Gastrocnemius medialis (tissue), 4 donors: ENCODE measurements at regions of chr1 and their contacts with region 1.

Region 1: GRCh38 chr1:59020151-59020997 is 236.5 kb upstream of the JUN start:
- DNase-seq: peak; percentile 31 to 69
- ATAC-seq: peak; percentile 72 to 73
- H3K4me3 ChIP-seq: peak overlapping the region; percentile 35 to 48 (median 36)
- H3K27ac ChIP-seq: peak overlapping the region; percentile 93 to 96 (median 95)
- H3K4me1 ChIP-seq: peaks cover 25 to 33% of the 10 kb centered on the region in 2 donors
- H3K27me3 ChIP-seq: no peaks in the 10 kb centered on the region
- CTCF ChIP-seq: no peak
- POLR2A ChIP-seq: no peak

Region 2: DNA sequence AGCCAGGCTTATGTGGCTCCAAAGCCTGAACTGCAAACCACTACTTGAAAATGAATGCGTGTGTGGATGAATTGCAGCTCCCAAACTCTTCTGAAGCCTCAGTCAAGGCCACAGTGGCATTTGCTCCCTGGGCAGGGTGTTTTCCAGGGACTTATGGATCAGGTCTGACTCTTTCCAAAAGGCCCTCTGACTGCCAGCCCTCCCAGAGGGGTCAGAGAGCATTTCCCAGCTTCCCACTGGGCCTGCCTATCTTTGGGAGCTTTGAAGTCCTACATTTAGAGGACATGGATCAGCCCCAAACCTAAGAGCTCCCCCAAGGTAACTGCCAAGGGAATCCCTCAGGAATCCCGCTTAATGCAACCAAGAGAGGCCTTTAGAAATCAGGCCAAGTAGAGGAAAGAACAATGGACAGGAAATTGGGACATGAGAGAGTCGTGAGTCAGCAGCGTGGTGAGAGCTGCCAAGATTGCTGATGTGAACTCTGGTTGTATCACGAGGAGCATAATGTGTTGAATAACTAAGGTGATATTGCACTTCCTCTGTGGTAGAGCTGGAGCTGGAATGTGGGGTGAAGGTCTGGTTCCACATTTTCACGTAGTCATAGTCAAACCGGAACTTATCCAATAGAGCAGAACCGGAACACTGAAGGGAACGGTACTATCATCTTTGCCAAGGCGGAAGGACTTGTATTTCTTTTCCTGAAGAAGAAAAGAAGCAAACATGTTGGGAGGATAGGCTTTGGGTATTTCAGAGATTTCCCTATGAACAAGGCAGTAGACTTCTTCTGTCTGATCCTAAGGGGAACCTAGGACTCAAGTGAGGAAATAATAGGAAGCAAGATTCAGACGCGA is 137.1 kb before region 1 on chr1:
- in situ Hi-C with region 1: no loop called
- intact Hi-C with region 1: loop called (anchors 5 kb)
- DNase-seq: peak; percentile 74 to 88
- ATAC-seq: peak; percentile 68 to 79
- H3K4me3 ChIP-seq: no peak overlapping the region
- H3K27ac ChIP-seq: peak overlapping the region; percentile 80 to 89 (median 84)
- H3K4me1 ChIP-seq: peaks cover 62 to 67% of the 10 kb centered on the region in 2 donors
- H3K27me3 ChIP-seq: no peaks in the 10 kb centered on the region
- CTCF ChIP-seq: no peak
- POLR2A ChIP-seq: no peak

Region 3: DNA sequence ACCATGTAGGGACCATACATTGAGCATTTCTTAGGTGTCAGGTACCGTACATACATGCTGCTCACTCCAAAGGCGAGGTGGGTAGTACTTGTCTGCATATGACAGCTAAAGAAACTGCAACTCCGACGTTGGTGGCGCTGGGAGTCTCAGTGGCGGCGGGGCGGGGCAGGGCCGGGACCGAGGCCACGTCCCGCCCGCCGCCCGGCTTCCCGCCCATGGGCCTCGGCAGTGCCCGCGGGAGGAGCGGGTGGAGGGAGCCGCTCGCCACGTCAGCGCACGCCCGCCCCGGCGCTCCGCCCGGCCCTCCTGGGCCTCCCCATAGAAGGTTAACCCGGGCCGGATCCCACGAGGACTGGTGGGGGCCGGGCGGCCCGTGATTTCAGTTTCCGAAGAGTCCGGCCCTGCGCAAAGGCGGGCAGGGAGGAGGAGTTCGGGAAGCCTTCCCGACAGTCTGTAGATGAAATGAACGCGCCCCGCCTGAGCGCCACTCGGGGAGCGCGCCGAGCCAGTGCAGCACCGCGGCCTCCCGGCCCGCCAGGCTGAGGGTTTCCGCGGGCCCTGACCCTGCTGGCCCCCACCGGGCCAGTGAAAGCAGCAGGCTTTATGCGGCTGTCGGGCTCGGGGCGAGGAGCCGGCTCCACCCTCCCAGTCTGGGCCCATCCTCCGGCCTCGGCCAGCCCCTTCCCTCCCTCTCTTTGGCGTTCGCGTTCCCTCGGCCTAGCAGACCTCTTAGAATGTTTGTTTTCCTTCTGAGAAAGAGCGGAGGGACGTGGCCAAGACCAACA is 116.7 kb before region 1 on chr1:
- in situ Hi-C with region 1: no loop called
- intact Hi-C with region 1: loop called (anchors 2 kb)
- DNase-seq: peak; percentile 86 to 93
- ATAC-seq: peak; percentile 69 to 81
- H3K4me3 ChIP-seq: peak overlapping the region; percentile 53 to 82 (median 60)
- H3K27ac ChIP-seq: peak overlapping the region; percentile 94 to 100 (median 94)
- H3K4me1 ChIP-seq: peaks cover 52 to 54% of the 10 kb centered on the region in 2 donors
- H3K27me3 ChIP-seq: no peaks in the 10 kb centered on the region
- CTCF ChIP-seq: no peak
- POLR2A ChIP-seq: peak; percentile 82 to 91